ENCODE measurements at regions of chr7 and their contacts with region 1.

Region 1: GRCh38 chr7:18337048-18337809 is 158.3 kb upstream of the HDAC9 start:
- DNase-seq: peak in 1 of 2 donors; percentile 34
- ATAC-seq: no peak
- H3K4me3 ChIP-seq: no peak overlapping the region
- H3K27ac ChIP-seq: no peak overlapping the region
- H3K4me1 ChIP-seq: no peaks in the 10 kb centered on the region
- H3K27me3 ChIP-seq: no peaks in the 10 kb centered on the region

Region 2: GRCh38 chr7:18212758-18213157 is 124.5 kb before region 1 on chr7:
- intact Hi-C with region 1: loop called in 1 of 2 experiments (anchors 10 kb)
- DNase-seq: no peak
- ATAC-seq: no peak
- H3K4me3 ChIP-seq: no peak overlapping the region
- H3K27ac ChIP-seq: no peak overlapping the region
- H3K4me1 ChIP-seq: no peaks in the 10 kb centered on the region
- H3K27me3 ChIP-seq: no peaks in the 10 kb centered on the region

Measured in aorta (tissue), 5 donors.